ENCODE measurements at regions of chr1 and their contacts with region 1.

Region 1: GRCh38 chr1:65254319-65255034 is 54.9 kb upstream of the DNAJC6 start:
- DNase-seq: peak; percentile 72 to 93 (median 84)
- ATAC-seq: peak; percentile 97
- H3K4me3 ChIP-seq: peak overlapping the region; percentile 77 to 91
- H3K4me3 Mint-ChIP-seq: peak overlapping the region; percentile 97
- H3K27ac ChIP-seq: peak overlapping the region in 1 of 2 experiments; percentile 57
- H3K27ac Mint-ChIP-seq: no peak overlapping the region
- H3K4me1 ChIP-seq: peaks cover 17% of the 10 kb centered on the region
- H3K4me1 Mint-ChIP-seq: peaks cover 18% of the 10 kb centered on the region
- H3K27me3 ChIP-seq: no peaks in the 10 kb centered on the region
- H3K27me3 Mint-ChIP-seq: peaks cover 10% of the 10 kb centered on the region
- CTCF ChIP-seq: no peak

Region 2: GRCh38 chr1:65059930-65060538 is 194.4 kb before region 1 on chr1:
- CTCF ChIA-PET with region 1: no interaction called
- POLR2A ChIA-PET with region 1: no interaction called
- intact Hi-C with region 1: loop called in 1 of 2 experiments (anchors 5 kb)
- DNase-seq: peak in 2 of 9 experiments; percentile 47 to 60
- ATAC-seq: peak; percentile 46
- H3K4me3 ChIP-seq: no peak overlapping the region
- H3K4me3 Mint-ChIP-seq: no peak overlapping the region
- H3K27ac ChIP-seq: no peak overlapping the region
- H3K27ac Mint-ChIP-seq: no peak overlapping the region
- H3K4me1 ChIP-seq: peaks cover 29% of the 10 kb centered on the region
- H3K4me1 Mint-ChIP-seq: peaks cover 60% of the 10 kb centered on the region
- H3K27me3 ChIP-seq: no peaks in the 10 kb centered on the region
- H3K27me3 Mint-ChIP-seq: no peaks in the 10 kb centered on the region
- CTCF ChIP-seq: peak; percentile 64

Region 3: GRCh38 chr1:65214340-65215027 is 40.0 kb before region 1 on chr1:
- CTCF ChIA-PET with region 1: no interaction called
- POLR2A ChIA-PET with region 1: interaction called, 3 read pairs
- intact Hi-C with region 1: loop called in 1 of 2 experiments (anchors 1 kb)
- DNase-seq: no peak
- ATAC-seq: no peak
- H3K4me3 ChIP-seq: no peak overlapping the region
- H3K4me3 Mint-ChIP-seq: no peak overlapping the region
- H3K27ac ChIP-seq: no peak overlapping the region
- H3K27ac Mint-ChIP-seq: no peak overlapping the region
- H3K4me1 ChIP-seq: peaks cover 4% of the 10 kb centered on the region
- H3K4me1 Mint-ChIP-seq: peaks cover 9% of the 10 kb centered on the region
- H3K27me3 ChIP-seq: no peaks in the 10 kb centered on the region
- H3K27me3 Mint-ChIP-seq: no peaks in the 10 kb centered on the region
- CTCF ChIP-seq: no peak

Region 4: DNA sequence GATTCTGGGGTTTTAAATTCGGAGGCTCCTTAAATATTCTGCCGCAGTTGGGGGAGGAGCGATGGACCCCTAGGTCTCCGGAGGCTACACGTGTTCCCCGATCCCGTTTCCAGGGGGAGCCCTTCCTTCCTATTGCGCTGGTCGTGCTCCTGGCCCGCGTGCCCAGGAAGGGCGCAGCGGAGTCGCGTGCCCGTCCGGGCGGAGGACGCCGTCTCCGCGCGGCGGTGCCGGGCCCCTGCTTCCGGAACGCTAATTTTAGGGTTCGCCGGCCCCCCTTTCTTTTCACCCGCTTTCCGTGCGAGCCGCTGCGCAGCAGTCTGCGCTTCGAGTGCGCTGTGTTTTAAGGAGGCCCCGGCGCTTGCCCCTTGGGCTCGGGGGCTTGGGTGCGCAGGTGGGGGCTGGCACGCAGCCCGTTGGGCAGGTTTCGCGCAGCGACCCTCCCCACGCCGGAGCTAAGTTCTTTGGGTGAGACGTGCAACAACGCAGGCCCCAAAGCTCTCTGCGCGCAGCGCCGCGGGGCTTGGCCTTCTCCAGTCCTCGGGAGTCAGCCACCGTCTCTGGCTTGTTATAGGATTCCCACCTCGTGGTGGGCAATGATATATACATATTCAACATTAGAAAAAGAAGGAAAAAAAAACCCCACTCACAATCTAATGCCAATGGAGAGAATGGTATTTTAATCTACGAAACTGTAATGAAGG is 11.3 kb after region 1 on chr1:
- CTCF ChIA-PET with region 1: interaction called, 3 read pairs
- POLR2A ChIA-PET with region 1: interaction called, 11 read pairs
- intact Hi-C with region 1: no loop called
- DNase-seq: peak in 8 of 9 experiments; percentile 7 to 73 (median 50)
- ATAC-seq: peak; percentile 81
- H3K4me3 ChIP-seq: peak overlapping the region; percentile 62 to 64
- H3K4me3 Mint-ChIP-seq: peak overlapping the region; percentile 80
- H3K27ac ChIP-seq: peak overlapping the region in 1 of 2 experiments; percentile 32
- H3K27ac Mint-ChIP-seq: no peak overlapping the region
- H3K4me1 ChIP-seq: peaks cover 18% of the 10 kb centered on the region
- H3K4me1 Mint-ChIP-seq: peaks cover 18% of the 10 kb centered on the region
- H3K27me3 ChIP-seq: no peaks in the 10 kb centered on the region
- H3K27me3 Mint-ChIP-seq: peaks cover 29% of the 10 kb centered on the region
- CTCF ChIP-seq: no peak

Region 5: GRCh38 chr1:65289449-65289848 is 35.0 kb after region 1 on chr1:
- CTCF ChIA-PET with region 1: no interaction called
- POLR2A ChIA-PET with region 1: no interaction called
- intact Hi-C with region 1: no loop called
- DNase-seq: no peak
- ATAC-seq: no peak
- H3K4me3 ChIP-seq: no peak overlapping the region
- H3K4me3 Mint-ChIP-seq: no peak overlapping the region
- H3K27ac ChIP-seq: no peak overlapping the region
- H3K27ac Mint-ChIP-seq: no peak overlapping the region
- H3K4me1 ChIP-seq: no peaks in the 10 kb centered on the region
- H3K4me1 Mint-ChIP-seq: no peaks in the 10 kb centered on the region
- H3K27me3 ChIP-seq: no peaks in the 10 kb centered on the region
- H3K27me3 Mint-ChIP-seq: peaks cover 6% of the 10 kb centered on the region
- CTCF ChIP-seq: no peak

Region 6: GRCh38 chr1:65419681-65420589 is 165.5 kb after region 1 on chr1:
- CTCF ChIA-PET with region 1: interaction called, 3 read pairs
- POLR2A ChIA-PET with region 1: interaction called, 11 read pairs
- intact Hi-C with region 1: loop called (anchors 1 to 2 kb)
- DNase-seq: peak; percentile 97 to 99 (median 98)
- ATAC-seq: peak; percentile 94
- H3K4me3 ChIP-seq: peak overlapping the region; percentile 96 to 98
- H3K4me3 Mint-ChIP-seq: no peak overlapping the region
- H3K27ac ChIP-seq: peak overlapping the region; percentile 69 to 71
- H3K27ac Mint-ChIP-seq: peak overlapping the region; percentile 93
- H3K4me1 ChIP-seq: peaks cover 15% of the 10 kb centered on the region
- H3K4me1 Mint-ChIP-seq: peaks cover 21% of the 10 kb centered on the region
- H3K27me3 ChIP-seq: peaks cover 0 to 3% of the 10 kb centered on the region in 2 experiments
- H3K27me3 Mint-ChIP-seq: no peaks in the 10 kb centered on the region
- CTCF ChIP-seq: no peak

Region 7: GRCh38 chr1:65467536-65467935 is 213.1 kb after region 1 on chr1:
- CTCF ChIA-PET with region 1: no interaction called
- POLR2A ChIA-PET with region 1: no interaction called
- intact Hi-C with region 1: no loop called
- DNase-seq: no peak
- ATAC-seq: no peak
- H3K4me3 ChIP-seq: no peak overlapping the region
- H3K4me3 Mint-ChIP-seq: no peak overlapping the region
- H3K27ac ChIP-seq: no peak overlapping the region
- H3K27ac Mint-ChIP-seq: no peak overlapping the region
- H3K4me1 ChIP-seq: no peaks in the 10 kb centered on the region
- H3K4me1 Mint-ChIP-seq: no peaks in the 10 kb centered on the region
- H3K27me3 ChIP-seq: no peaks in the 10 kb centered on the region
- H3K27me3 Mint-ChIP-seq: no peaks in the 10 kb centered on the region
- CTCF ChIP-seq: no peak